ENCODE measurements at regions of chr22 and their contacts with region 1.

Region 1: GRCh38 chr22:24060375-24060788 is 49.3 kb downstream of the CABIN1 start:
- DNase-seq: peak in 1 of 5 donors; percentile 31
- ATAC-seq: peak; percentile 49 to 79 (median 75)
- H3K4me3 ChIP-seq: no peak overlapping the region
- H3K27ac ChIP-seq: peak overlapping the region in 5 of 12 donors; percentile 3 to 60 (median 42)
- H3K4me1 ChIP-seq: peaks cover 0 to 29% (median 17%) of the 10 kb centered on the region in 12 donors
- H3K27me3 ChIP-seq: no peaks in the 10 kb centered on the region
- CTCF ChIP-seq: no peak
- POLR2A ChIP-seq: no peak

Region 2: DNA sequence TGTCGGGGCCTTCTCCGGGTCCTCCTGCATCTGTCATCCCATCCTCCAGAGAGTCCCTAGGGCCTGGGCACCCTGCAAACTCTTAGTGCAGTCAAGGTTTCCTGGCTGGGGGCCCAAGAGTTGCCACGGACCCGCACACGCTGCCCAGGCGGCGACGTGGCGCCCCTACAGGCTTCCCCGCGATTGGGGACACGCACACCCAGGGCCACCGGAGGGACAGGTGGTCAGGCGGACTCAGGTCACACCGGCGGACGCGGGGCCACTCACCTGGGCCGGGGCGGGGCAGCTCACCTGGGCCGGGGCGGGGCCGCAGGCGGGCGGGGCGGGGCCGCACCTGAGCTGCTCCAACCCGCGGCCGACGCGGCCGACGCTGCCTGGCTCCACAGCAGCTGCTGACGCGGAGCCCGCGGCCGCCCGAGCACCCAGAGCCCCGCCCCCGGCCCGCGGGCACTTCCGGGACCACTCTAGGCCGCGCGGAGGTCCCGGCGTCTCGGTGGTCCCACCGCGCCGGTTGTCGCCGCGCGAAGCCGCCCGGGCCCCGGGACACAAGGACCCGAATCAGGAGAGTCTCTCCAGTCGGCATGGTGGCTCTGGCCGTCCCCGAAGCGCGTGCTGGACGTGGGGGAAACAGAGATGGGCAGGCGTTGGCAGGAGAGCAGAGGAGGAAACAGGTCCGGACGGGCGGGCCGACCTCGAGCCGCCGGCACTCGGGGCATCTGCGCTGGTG is 309.5 kb before region 1 on chr22 and contains the start of gene ZNF70:
- intact Hi-C with region 1: no loop called
- DNase-seq: peak; percentile 86 to 93 (median 87)
- ATAC-seq: peak; percentile 78 to 96 (median 91)
- H3K4me3 ChIP-seq: peak within 1 kb of the TSS; percentile 46 to 81 (median 71)
- H3K27ac ChIP-seq: peak within 1 kb of the TSS; percentile 63 to 92 (median 86)
- H3K4me1 ChIP-seq: peaks cover 0 to 22% (median 8%) of the 10 kb centered on the region in 12 donors
- H3K27me3 ChIP-seq: no peaks in the 10 kb centered on the region
- CTCF ChIP-seq: peak in 4 of 12 donors; percentile 5 to 37 (median 32)
- POLR2A ChIP-seq: peak in 1 of 2 donors; percentile 55
- total RNA-seq, gene ZNF70: 2.7 to 4.6 (median 3.3) TPM

Region 3: DNA sequence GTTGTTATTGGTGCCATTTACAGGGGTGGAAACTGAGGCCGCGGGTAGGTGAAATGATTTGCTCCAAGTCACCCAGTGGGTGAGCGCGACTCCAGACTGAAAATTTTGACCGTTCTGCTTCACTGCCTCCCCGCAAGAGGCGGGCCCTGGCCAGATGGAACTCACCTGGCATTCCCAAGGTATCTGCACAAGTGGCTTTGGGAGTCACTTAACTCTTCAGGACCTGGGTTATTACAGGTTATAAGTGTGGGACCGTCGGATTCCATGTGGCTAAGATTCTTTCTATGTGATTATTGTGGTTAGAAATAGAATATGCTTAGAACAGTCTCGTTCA is 48.7 kb before region 1 on chr22:
- intact Hi-C with region 1: loop called in 1 of 10 experiments (anchors 5 kb)
- DNase-seq: no peak
- ATAC-seq: peak in 1 of 4 donors; percentile 1
- H3K4me3 ChIP-seq: peak overlapping the region; percentile 57 to 98 (median 94)
- H3K27ac ChIP-seq: peak overlapping the region; percentile 33 to 92 (median 84)
- H3K4me1 ChIP-seq: peaks cover 0 to 18% (median 12%) of the 10 kb centered on the region in 12 donors
- H3K27me3 ChIP-seq: no peaks in the 10 kb centered on the region
- CTCF ChIP-seq: no peak
- POLR2A ChIP-seq: no peak

Region 4: GRCh38 chr22:24106385-24107381 is 46.3 kb after region 1 on chr22:
- intact Hi-C with region 1: no loop called
- DNase-seq: peak in 2 of 5 donors; percentile 28 to 51
- ATAC-seq: peak in 2 of 4 donors; percentile 8 to 21
- H3K4me3 ChIP-seq: no peak overlapping the region
- H3K27ac ChIP-seq: peak overlapping the region in 9 of 12 donors; percentile 14 to 68 (median 57)
- H3K4me1 ChIP-seq: peaks cover 0 to 48% (median 23%) of the 10 kb centered on the region in 12 donors
- H3K27me3 ChIP-seq: no peaks in the 10 kb centered on the region
- CTCF ChIP-seq: peak in 8 of 12 donors; percentile 12 to 46 (median 30)
- POLR2A ChIP-seq: no peak

Measured in heart left ventricle (tissue), 16 donors.